ENCODE measurements at regions of chr1 and their contacts with region 1.

Region 1: GRCh38 chr1:234309598-234310459 is 63.4 kb upstream of the COA6 start:
- DNase-seq: peak; percentile 61 to 71 (median 69)
- ATAC-seq: peak; percentile 73 to 95 (median 84)
- H3K4me3 ChIP-seq: no peak overlapping the region
- H3K27ac ChIP-seq: no peak overlapping the region
- H3K4me1 ChIP-seq: peaks cover 0 to 4% (median 0%) of the 10 kb centered on the region in 4 donors
- H3K27me3 ChIP-seq: no peaks in the 10 kb centered on the region
- CTCF ChIP-seq: peak; percentile 79 to 91 (median 88)
- POLR2A ChIP-seq: no peak

Region 2: DNA sequence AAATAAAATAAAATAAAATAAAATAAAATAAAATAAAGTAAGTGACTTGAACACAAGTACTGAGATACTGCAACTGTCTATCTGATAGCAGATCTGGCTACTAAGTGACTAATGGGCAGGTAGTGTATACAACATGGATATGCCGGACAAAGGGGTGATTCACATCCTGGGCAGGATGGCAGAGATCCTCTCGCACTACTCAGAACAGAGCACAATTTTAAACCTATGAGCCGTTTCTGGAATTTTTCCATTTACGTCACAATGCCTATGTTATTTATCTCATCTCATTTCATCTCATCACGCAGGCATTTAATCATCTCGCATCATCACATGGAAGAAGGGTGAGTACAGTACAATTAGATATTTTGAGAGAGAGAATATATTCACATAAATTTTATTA is 169.9 kb before region 1 on chr1:
- intact Hi-C with region 1: loop called in 1 of 2 experiments (anchors 10 kb)
- DNase-seq: no peak
- ATAC-seq: no peak
- H3K4me3 ChIP-seq: no peak overlapping the region
- H3K27ac ChIP-seq: no peak overlapping the region
- H3K4me1 ChIP-seq: no peaks in the 10 kb centered on the region
- H3K27me3 ChIP-seq: no peaks in the 10 kb centered on the region
- CTCF ChIP-seq: no peak
- POLR2A ChIP-seq: no peak

Region 3: DNA sequence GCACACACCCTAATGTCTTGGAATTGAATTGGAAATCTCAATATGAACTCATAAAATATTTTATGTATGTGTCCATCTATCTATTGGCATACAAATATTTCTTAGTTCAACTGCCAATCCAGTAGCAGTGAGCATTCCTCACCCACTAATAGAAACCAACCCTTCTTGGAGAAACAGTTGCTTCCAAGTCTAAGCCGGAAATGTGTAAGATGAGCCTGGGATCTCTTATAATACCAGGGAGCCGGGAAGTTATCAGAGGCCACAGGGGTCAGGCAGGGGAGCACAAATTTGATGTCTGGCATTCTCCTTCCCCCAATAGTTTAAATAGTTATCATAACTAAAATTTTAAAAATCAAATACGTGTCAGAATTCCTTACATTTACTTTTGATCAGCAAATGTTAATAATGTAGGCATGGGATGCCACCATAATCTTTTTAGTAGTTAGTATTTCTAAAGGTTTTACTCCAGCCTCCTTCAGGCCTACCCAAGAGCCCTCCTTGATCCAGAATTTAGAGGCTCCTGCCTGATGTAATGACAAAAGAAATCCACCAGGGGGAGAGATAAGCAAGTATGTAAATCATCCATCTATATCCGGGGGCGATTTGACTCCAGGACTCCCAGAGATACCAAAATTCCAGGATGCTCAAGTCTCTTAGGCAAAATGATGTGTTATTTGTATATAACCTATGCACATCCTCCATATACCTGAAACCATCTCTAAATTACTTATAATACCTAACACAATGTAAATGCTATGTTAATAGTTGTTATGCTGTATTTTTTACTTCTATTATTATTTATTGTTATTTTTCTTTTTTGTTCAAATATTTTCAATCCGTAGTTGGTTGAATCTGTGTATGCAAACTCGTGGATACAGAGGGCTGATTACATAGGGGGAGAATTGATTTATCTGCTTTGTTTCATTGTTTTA is 155.2 kb before region 1 on chr1:
- intact Hi-C with region 1: loop called (anchors 5 to 10 kb)
- DNase-seq: no peak
- ATAC-seq: peak; percentile 76 to 81 (median 78)
- H3K4me3 ChIP-seq: no peak overlapping the region
- H3K27ac ChIP-seq: no peak overlapping the region
- H3K4me1 ChIP-seq: no peaks in the 10 kb centered on the region
- H3K27me3 ChIP-seq: no peaks in the 10 kb centered on the region
- CTCF ChIP-seq: peak; percentile 74 to 82 (median 80)
- POLR2A ChIP-seq: no peak

Region 4: GRCh38 chr1:234375672-234376071 is 65.8 kb after region 1 on chr1:
- intact Hi-C with region 1: no loop called
- DNase-seq: no peak
- ATAC-seq: no peak
- H3K4me3 ChIP-seq: no peak overlapping the region
- H3K27ac ChIP-seq: no peak overlapping the region
- H3K4me1 ChIP-seq: peaks cover 0 to 19% (median 5%) of the 10 kb centered on the region in 4 donors
- H3K27me3 ChIP-seq: no peaks in the 10 kb centered on the region
- CTCF ChIP-seq: no peak
- POLR2A ChIP-seq: no peak

Region 5: DNA sequence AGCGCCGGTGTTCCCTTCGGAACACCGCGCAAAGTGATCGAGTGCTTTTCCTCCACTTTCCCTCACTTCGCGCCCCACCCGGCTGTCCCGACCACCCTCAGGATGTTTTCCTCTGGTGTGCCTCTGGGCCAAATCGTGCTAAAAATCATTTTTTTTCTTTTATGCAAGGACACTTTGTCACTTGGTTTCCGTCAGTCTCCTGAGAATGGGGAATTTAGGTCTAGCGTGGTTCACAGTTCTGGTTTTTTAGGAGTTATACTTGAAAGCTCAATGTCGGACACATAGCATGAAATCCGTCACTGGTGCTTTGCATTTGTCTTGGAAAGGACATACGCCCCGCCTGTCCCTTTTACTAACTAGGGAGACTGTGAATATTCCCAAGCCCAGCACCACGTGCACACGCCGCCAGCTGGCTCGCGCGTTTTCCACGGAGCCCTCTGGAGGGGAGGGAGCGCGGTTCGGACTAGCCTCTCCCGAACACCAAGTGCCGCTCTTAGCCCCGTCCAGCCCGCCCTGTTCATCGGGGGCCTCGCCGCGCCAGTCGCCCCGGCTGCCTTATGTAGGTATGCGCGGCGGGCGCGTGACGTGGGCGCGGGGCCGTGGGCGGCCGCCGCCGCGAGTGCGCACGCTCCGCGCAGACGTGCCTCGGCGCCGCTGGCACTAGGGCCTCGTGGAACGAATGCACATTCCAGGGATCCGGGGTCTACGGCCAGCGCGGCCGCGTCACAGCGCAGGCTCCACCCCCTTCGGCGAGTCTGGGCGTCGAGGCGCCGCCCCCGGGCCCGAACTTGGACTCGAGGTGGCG is 300.7 kb after region 1 on chr1:
- intact Hi-C with region 1: no loop called
- DNase-seq: peak; percentile 98
- ATAC-seq: peak; percentile 46 to 76 (median 63)
- H3K4me3 ChIP-seq: peak overlapping the region; percentile 30 to 52 (median 51)
- H3K27ac ChIP-seq: peak overlapping the region; percentile 96 to 100 (median 98)
- H3K4me1 ChIP-seq: peaks cover 0 to 33% (median 16%) of the 10 kb centered on the region in 4 donors
- H3K27me3 ChIP-seq: no peaks in the 10 kb centered on the region
- CTCF ChIP-seq: peak in 1 of 4 donors; percentile 17
- POLR2A ChIP-seq: peak; percentile 100